Esophagus muscularis mucosa (tissue), 4 donors: ENCODE measurements at regions of chr4 and their contacts with region 1.

Region 1: GRCh38 chr4:84235126-84235944 is 263.8 kb downstream of the NKX6-1 start:
- DNase-seq: no peak
- H3K4me3 ChIP-seq: no peak overlapping the region
- H3K27ac ChIP-seq: peak overlapping the region in 1 of 4 donors; percentile 14
- H3K4me1 ChIP-seq: peaks cover 0 to 60% (median 51%) of the 10 kb centered on the region in 4 donors
- H3K27me3 ChIP-seq: no peaks in the 10 kb centered on the region
- CTCF ChIP-seq: no peak
- EP300 ChIP-seq: no peak
- POLR2A ChIP-seq: no peak

Region 2: GRCh38 chr4:84159762-84160161 is 75.6 kb before region 1 on chr4:
- intact Hi-C with region 1: loop called (anchors 5 kb)
- DNase-seq: no peak
- H3K4me3 ChIP-seq: no peak overlapping the region
- H3K27ac ChIP-seq: peak overlapping the region; percentile 42 to 71 (median 62)
- H3K4me1 ChIP-seq: peaks cover 0 to 68% (median 42%) of the 10 kb centered on the region in 4 donors
- H3K27me3 ChIP-seq: no peaks in the 10 kb centered on the region
- CTCF ChIP-seq: peak; percentile 51 to 69 (median 62)
- EP300 ChIP-seq: no peak
- POLR2A ChIP-seq: no peak

Region 3: DNA sequence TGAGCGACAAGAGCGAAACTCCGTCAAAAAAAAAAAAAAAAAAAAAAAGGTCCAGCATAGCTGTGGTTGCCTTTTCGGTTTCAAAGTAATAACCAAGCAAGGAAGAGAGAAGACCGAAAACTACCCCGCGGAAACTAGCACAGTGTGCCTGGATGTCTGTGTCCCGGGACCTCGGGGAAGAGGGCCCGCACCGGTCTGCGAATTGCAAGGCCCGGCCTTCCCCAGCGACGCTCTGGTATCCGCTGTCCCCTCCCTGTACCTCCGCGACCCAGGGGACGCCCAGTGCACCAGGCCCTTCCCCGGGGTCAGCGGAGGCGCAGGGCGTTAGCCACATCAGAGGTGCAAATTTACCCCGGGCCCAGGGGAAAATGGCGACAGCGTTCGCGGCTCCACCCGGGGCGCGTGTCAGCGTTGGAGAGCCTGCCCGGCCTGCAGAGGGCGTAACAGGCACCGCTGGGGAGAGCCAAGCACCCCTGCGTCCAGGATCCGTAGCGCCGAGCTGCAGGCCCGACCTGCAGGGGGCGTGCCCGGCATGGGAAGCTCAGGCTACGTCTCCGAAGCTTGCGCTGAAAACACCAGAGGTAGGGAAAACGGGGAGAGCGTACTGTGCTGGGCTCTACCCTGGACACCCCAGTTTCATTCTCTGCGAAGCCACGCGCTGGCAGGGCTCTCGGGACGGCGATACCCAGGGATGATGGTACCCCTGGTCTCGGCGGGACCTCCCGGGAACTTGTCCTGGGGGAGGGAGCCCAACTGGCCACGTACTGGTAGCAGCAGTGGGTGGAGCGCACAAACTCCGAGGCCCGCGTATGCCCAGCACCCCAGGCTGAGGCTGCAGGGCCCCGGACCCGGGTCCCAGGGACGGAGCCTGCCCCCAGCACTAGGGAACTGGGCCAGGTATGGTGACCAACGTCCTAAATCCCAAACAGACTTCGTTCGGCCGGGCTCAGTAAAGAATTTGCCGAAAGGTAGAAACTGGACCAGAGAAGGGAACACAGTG is 247.5 kb after region 1 on chr4:
- intact Hi-C with region 1: loop called (anchors 10 kb)
- DNase-seq: no peak
- H3K4me3 ChIP-seq: peak overlapping the region; percentile 5 to 39 (median 20)
- H3K27ac ChIP-seq: no peak overlapping the region
- H3K4me1 ChIP-seq: peaks cover 11 to 54% (median 34%) of the 10 kb centered on the region in 4 donors
- H3K27me3 ChIP-seq: peaks cover 0 to 29% (median 0%) of the 10 kb centered on the region in 4 donors
- CTCF ChIP-seq: peak in 2 of 3 experiments; percentile 21
- EP300 ChIP-seq: no peak
- POLR2A ChIP-seq: no peak

Region 4: DNA sequence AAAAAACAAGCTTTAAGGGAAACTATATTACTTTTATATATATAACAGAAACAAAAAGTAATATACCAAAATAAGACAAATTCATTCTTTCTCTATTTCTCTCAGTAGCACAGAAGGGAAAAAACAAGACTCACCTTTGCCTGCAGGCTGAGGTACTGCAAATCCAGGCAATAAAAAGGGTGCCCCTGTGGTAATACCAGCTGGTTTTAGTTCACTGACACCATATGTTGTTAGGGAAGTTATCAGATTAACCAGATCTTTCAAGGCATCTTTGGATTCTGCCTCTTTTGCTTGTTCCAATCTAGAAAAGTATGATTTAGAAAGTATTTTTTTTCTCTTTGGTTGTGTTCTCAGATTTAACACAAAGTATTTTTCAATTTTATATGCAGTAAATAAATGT is 591.3 kb after region 1 on chr4:
- intact Hi-C with region 1: no loop called
- DNase-seq: no peak
- H3K4me3 ChIP-seq: no peak overlapping the region
- H3K27ac ChIP-seq: no peak overlapping the region
- H3K4me1 ChIP-seq: no peaks in the 10 kb centered on the region
- H3K27me3 ChIP-seq: no peaks in the 10 kb centered on the region
- CTCF ChIP-seq: no peak
- EP300 ChIP-seq: no peak
- POLR2A ChIP-seq: no peak